Dendritic cell treated with granulocyte-macrophage colony-stimulating factor and Interleukin-4, amounts not matched to agents 40 ng/mL and 50 ng/mL, for 4 days (primary cell): ENCODE measurements at regions of chr12 and their contacts with region 1.

Region 1: DNA sequence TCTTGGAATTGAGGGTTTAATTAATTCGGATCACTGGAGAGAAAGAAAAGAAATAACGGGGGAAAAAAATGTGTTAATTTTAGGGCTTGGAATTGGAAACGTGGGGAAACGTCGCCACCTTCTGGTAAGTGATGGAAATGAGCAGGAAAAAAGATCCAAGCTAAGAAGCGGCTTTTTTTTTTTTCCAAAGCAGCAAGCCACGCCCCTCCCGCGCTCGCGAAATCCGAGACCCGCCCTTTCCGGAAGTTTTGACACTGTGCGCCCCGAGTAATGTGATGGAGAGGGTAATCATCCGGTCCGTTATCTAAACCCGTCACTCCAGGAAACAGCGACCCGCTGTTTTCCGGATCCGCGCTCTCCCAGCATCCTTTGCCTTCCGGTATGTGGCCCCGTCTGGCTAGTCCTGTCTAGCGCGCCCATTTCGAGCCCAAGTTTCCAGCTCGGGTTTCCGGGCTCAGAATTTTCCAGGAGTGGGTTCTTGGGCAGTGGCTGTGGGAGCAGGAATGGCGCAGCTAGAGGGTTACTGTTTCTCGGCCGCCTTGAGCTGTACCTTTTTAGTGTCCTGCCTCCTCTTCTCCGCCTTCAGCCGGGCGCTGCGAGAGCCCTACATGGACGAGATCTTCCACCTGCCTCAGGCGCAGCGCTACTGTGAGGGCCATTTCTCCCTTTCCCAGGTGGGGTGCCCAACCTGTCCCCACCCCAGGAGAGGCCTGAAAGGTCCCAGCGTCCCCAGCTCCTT is at the start of gene ALG10B:
- H3K4me3 Mint-ChIP-seq: peak within 1 kb of the TSS; percentile 87
- H3K27ac Mint-ChIP-seq: peak within 1 kb of the TSS; percentile 90
- H3K4me1 Mint-ChIP-seq: peaks cover 7% of the 10 kb centered on the region
- H3K27me3 Mint-ChIP-seq: peaks cover 2% of the 10 kb centered on the region

Region 2: GRCh38 chr12:38384816-38385378 is 68.3 kb after region 1 on chr12:
- intact Hi-C with region 1: loop called (anchors 5 kb)
- H3K4me3 Mint-ChIP-seq: no peak overlapping the region
- H3K27ac Mint-ChIP-seq: no peak overlapping the region
- H3K4me1 Mint-ChIP-seq: peaks cover 15% of the 10 kb centered on the region
- H3K27me3 Mint-ChIP-seq: no peaks in the 10 kb centered on the region

Region 3: GRCh38 chr12:38904932-38905479 is 588.4 kb after region 1 on chr12:
- intact Hi-C with region 1: loop called (anchors 2 kb)
- H3K4me3 Mint-ChIP-seq: peak overlapping the region; percentile 98
- H3K27ac Mint-ChIP-seq: peak overlapping the region; percentile 99
- H3K4me1 Mint-ChIP-seq: peaks cover 44% of the 10 kb centered on the region
- H3K27me3 Mint-ChIP-seq: no peaks in the 10 kb centered on the region